OCI-LY7 (cell line): ENCODE measurements at regions of chr2 and their contacts with region 1.

Region 1: GRCh38 chr2:102020596-102021181 is 28.9 kb downstream of the IL1R2 start:
- DNase-seq: peak; percentile 63
- H3K4me3 ChIP-seq: no peak overlapping the region
- H3K27ac ChIP-seq: no peak overlapping the region
- H3K4me1 ChIP-seq: no peaks in the 10 kb centered on the region
- CTCF ChIP-seq: peak; percentile 94

Region 2: GRCh38 chr2:102449370-102449974 is 428.8 kb after region 1 on chr2:
- CTCF ChIA-PET with region 1: no interaction called
- POLR2A ChIA-PET with region 1: no interaction called
- intact Hi-C with region 1: loop called (anchors 5 kb)
- DNase-seq: peak; percentile 16
- H3K4me3 ChIP-seq: no peak overlapping the region
- H3K27ac ChIP-seq: no peak overlapping the region
- H3K4me1 ChIP-seq: no peaks in the 10 kb centered on the region
- CTCF ChIP-seq: peak; percentile 85